ENCODE measurements at regions of chr11 and their contacts with region 1.

Region 1: DNA sequence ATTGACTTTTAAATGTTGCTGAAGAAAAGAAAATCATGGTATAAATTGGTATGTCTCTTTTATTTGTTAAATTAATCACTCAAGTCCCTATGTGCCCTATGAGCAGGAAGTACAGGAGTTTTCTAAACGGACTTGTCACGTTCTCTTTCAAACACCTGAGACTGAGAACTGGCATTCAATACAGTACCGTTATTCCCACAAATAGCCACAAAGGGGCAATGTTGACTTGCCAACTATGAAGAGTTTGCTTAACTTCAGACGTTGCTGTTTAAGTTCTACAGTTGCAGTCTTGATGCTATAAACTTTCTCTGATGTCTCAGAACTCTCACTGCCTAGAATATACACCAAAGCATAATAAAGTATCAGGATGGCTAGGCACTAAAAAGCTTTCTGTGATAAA is 7.6 kb downstream of the OR56A1 start:
- DNase-seq: peak in 1 of 2 donors; percentile 79
- H3K4me3 ChIP-seq: no peak overlapping the region
- H3K27ac ChIP-seq: no peak overlapping the region
- H3K4me1 ChIP-seq: peaks cover 0 to 7% (median 0%) of the 10 kb centered on the region in 4 donors
- H3K27me3 ChIP-seq: no peaks in the 10 kb centered on the region
- CTCF ChIP-seq: peak in 4 of 7 experiments; percentile 14 to 69 (median 29)
- EP300 ChIP-seq: no peak
- POLR2A ChIP-seq: no peak

Region 2: GRCh38 chr11:5541427-5541826 is 481.5 kb before region 1 on chr11:
- intact Hi-C with region 1: no loop called
- DNase-seq: no peak
- H3K4me3 ChIP-seq: no peak overlapping the region
- H3K27ac ChIP-seq: no peak overlapping the region
- H3K4me1 ChIP-seq: no peaks in the 10 kb centered on the region
- H3K27me3 ChIP-seq: no peaks in the 10 kb centered on the region
- CTCF ChIP-seq: no peak
- EP300 ChIP-seq: no peak
- POLR2A ChIP-seq: no peak

Region 3: DNA sequence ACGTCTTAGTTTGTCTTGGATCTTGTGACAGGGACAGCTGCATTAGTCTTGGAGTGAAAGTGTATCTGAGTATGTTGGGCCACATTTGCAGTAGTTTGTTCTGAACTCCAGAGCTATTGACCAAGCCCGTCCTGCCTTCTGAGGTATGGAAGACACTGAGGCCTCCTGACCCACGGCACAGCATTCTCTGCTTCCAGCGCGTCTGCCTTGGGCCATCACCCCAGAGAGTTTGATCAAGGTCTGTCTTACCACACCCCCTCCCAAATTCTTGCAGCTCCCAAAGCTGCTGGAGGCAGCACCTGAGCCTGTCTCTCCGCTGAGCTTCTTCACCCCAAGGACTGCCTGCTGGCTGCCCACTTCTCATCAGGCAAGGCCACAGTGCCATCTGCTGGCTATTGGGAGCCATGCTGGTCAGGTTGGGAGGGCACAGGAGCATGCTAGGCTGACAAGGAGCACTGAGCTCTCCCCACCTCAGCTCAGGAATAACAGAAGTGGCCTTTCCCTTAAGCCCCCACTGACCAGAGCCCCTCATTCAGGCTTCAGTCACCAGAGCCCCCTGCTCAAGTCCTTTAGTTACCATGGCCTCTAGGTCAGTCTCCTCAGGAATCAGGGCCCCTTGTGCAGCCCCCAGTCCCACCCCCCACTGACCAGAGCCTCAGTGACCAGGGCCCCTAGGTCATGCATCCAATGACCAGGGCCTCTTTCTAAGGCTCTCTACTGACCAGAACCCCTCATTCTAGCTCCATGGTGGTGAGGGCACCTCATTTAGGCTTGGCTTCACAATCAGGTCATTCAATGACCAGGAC is 340.1 kb after region 1 on chr11:
- intact Hi-C with region 1: loop called (anchors 5 kb)
- DNase-seq: peak; percentile 87 to 93
- H3K4me3 ChIP-seq: no peak overlapping the region
- H3K27ac ChIP-seq: peak overlapping the region in 3 of 5 donors; percentile 8 to 58 (median 23)
- H3K4me1 ChIP-seq: peaks cover 0 to 31% (median 16%) of the 10 kb centered on the region in 4 donors
- H3K27me3 ChIP-seq: no peaks in the 10 kb centered on the region
- CTCF ChIP-seq: peak in 5 of 7 experiments; percentile 81 to 87 (median 83)
- EP300 ChIP-seq: no peak
- POLR2A ChIP-seq: no peak